Gastrocnemius medialis (tissue), 4 donors: ENCODE measurements at regions of chr9 and their contacts with region 1.

Region 1: GRCh38 chr9:130461218-130461630 is 16.5 kb downstream of the ASS1 start:
- DNase-seq: peak in 1 of 2 donors; percentile 35
- ATAC-seq: peak in 1 of 2 donors; percentile 30
- H3K4me3 ChIP-seq: no peak overlapping the region
- H3K27ac ChIP-seq: no peak overlapping the region
- H3K4me1 ChIP-seq: no peaks in the 10 kb centered on the region
- H3K27me3 ChIP-seq: no peaks in the 10 kb centered on the region
- CTCF ChIP-seq: peak; percentile 70 to 95 (median 94)
- POLR2A ChIP-seq: no peak

Region 2: GRCh38 chr9:130359819-130360218 is 101.4 kb before region 1 on chr9:
- in situ Hi-C with region 1: no loop called
- intact Hi-C with region 1: no loop called
- DNase-seq: no peak
- ATAC-seq: no peak
- H3K4me3 ChIP-seq: no peak overlapping the region
- H3K27ac ChIP-seq: no peak overlapping the region
- H3K4me1 ChIP-seq: no peaks in the 10 kb centered on the region
- H3K27me3 ChIP-seq: no peaks in the 10 kb centered on the region
- CTCF ChIP-seq: no peak
- POLR2A ChIP-seq: no peak

Region 3: GRCh38 chr9:130626249-130626992 is 165.2 kb after region 1 on chr9:
- in situ Hi-C with region 1: no loop called
- intact Hi-C with region 1: no loop called
- DNase-seq: no peak
- ATAC-seq: no peak
- H3K4me3 ChIP-seq: no peak overlapping the region
- H3K27ac ChIP-seq: no peak overlapping the region
- H3K4me1 ChIP-seq: no peaks in the 10 kb centered on the region
- H3K27me3 ChIP-seq: no peaks in the 10 kb centered on the region
- CTCF ChIP-seq: no peak
- POLR2A ChIP-seq: no peak

Region 4: GRCh38 chr9:130675396-130675795 is 214.2 kb after region 1 on chr9:
- in situ Hi-C with region 1: loop called in 1 of 4 experiments (anchors 5 kb)
- intact Hi-C with region 1: no loop called
- DNase-seq: no peak
- ATAC-seq: no peak
- H3K4me3 ChIP-seq: no peak overlapping the region
- H3K27ac ChIP-seq: no peak overlapping the region
- H3K4me1 ChIP-seq: no peaks in the 10 kb centered on the region
- H3K27me3 ChIP-seq: no peaks in the 10 kb centered on the region
- CTCF ChIP-seq: no peak
- POLR2A ChIP-seq: no peak